Naive thymus-derived CD4-positive, alpha-beta T cell (primary cell): ENCODE measurements at regions of chr20 and their contacts with region 1.

Region 1: GRCh38 chr20:41232973-41233926 is 84.3 kb downstream of the ZHX3 start:
- DNase-seq: no peak
- ATAC-seq: no peak
- H3K4me3 ChIP-seq: no peak overlapping the region
- H3K4me3 Mint-ChIP-seq: peak overlapping the region in 5 of 10 donors; percentile 9 to 55 (median 15)
- H3K27ac ChIP-seq: no peak overlapping the region
- H3K27ac Mint-ChIP-seq: peak overlapping the region in 2 of 9 donors; percentile 1 to 28
- H3K4me1 ChIP-seq: peaks cover 0 to 7% of the 10 kb centered on the region in 2 donors
- H3K4me1 Mint-ChIP-seq: peaks cover 16 to 31% (median 20%) of the 10 kb centered on the region in 7 donors
- H3K27me3 ChIP-seq: no peaks in the 10 kb centered on the region
- H3K27me3 Mint-ChIP-seq: no peaks in the 10 kb centered on the region

Region 2: GRCh38 chr20:40970201-40970600 is 263.0 kb before region 1 on chr20:
- CTCF ChIA-PET with region 1: interaction called, 3 read pairs
- POLR2A ChIA-PET with region 1: no interaction called
- intact Hi-C with region 1: loop called (anchors 1 kb)
- DNase-seq: no peak
- ATAC-seq: no peak
- H3K4me3 ChIP-seq: no peak overlapping the region
- H3K4me3 Mint-ChIP-seq: no peak overlapping the region
- H3K27ac ChIP-seq: no peak overlapping the region
- H3K27ac Mint-ChIP-seq: no peak overlapping the region
- H3K4me1 ChIP-seq: no peaks in the 10 kb centered on the region
- H3K4me1 Mint-ChIP-seq: peaks cover 5 to 12% (median 9%) of the 10 kb centered on the region in 7 donors
- H3K27me3 ChIP-seq: no peaks in the 10 kb centered on the region
- H3K27me3 Mint-ChIP-seq: peaks cover 0 to 49% (median 8%) of the 10 kb centered on the region in 5 donors

Region 3: GRCh38 chr20:41161886-41162285 is 71.4 kb before region 1 on chr20:
- CTCF ChIA-PET with region 1: interaction called, 8 read pairs
- POLR2A ChIA-PET with region 1: no interaction called
- intact Hi-C with region 1: loop called in 1 of 2 experiments (anchors 1 kb)
- DNase-seq: no peak
- ATAC-seq: no peak
- H3K4me3 ChIP-seq: no peak overlapping the region
- H3K4me3 Mint-ChIP-seq: peak overlapping the region in 9 of 10 donors; percentile 25 to 67 (median 39)
- H3K27ac ChIP-seq: peak overlapping the region; percentile 82
- H3K27ac Mint-ChIP-seq: peak overlapping the region; percentile 79 to 100 (median 94)
- H3K4me1 ChIP-seq: peaks cover 59 to 61% of the 10 kb centered on the region in 2 donors
- H3K4me1 Mint-ChIP-seq: peaks cover 60 to 81% (median 76%) of the 10 kb centered on the region in 7 donors
- H3K27me3 ChIP-seq: no peaks in the 10 kb centered on the region
- H3K27me3 Mint-ChIP-seq: no peaks in the 10 kb centered on the region

Region 4: GRCh38 chr20:41222296-41222695 is 11.0 kb before region 1 on chr20:
- CTCF ChIA-PET with region 1: interaction called, 13 read pairs
- POLR2A ChIA-PET with region 1: no interaction called
- intact Hi-C with region 1: no loop called
- DNase-seq: no peak
- ATAC-seq: no peak
- H3K4me3 ChIP-seq: no peak overlapping the region
- H3K4me3 Mint-ChIP-seq: no peak overlapping the region
- H3K27ac ChIP-seq: no peak overlapping the region
- H3K27ac Mint-ChIP-seq: peak overlapping the region in 1 of 9 donors; percentile 65
- H3K4me1 ChIP-seq: no peaks in the 10 kb centered on the region
- H3K4me1 Mint-ChIP-seq: peaks cover 0 to 9% (median 0%) of the 10 kb centered on the region in 7 donors
- H3K27me3 ChIP-seq: no peaks in the 10 kb centered on the region
- H3K27me3 Mint-ChIP-seq: no peaks in the 10 kb centered on the region

Region 5: GRCh38 chr20:41339507-41340326 is 106.5 kb after region 1 on chr20:
- CTCF ChIA-PET with region 1: interaction called, 7 read pairs
- POLR2A ChIA-PET with region 1: no interaction called
- intact Hi-C with region 1: loop called (anchors 1 to 2 kb)
- DNase-seq: peak; percentile 72 to 92 (median 83)
- ATAC-seq: peak; percentile 97
- H3K4me3 ChIP-seq: peak overlapping the region; percentile 28
- H3K4me3 Mint-ChIP-seq: peak overlapping the region; percentile 72 to 85 (median 82)
- H3K27ac ChIP-seq: no peak overlapping the region
- H3K27ac Mint-ChIP-seq: peak overlapping the region in 5 of 9 donors; percentile 47 to 86 (median 67)
- H3K4me1 ChIP-seq: peaks cover 0 to 3% of the 10 kb centered on the region in 2 donors
- H3K4me1 Mint-ChIP-seq: peaks cover 8 to 15% (median 9%) of the 10 kb centered on the region in 7 donors
- H3K27me3 ChIP-seq: no peaks in the 10 kb centered on the region
- H3K27me3 Mint-ChIP-seq: peaks cover 0 to 12% (median 3%) of the 10 kb centered on the region in 5 donors

Region 6: DNA sequence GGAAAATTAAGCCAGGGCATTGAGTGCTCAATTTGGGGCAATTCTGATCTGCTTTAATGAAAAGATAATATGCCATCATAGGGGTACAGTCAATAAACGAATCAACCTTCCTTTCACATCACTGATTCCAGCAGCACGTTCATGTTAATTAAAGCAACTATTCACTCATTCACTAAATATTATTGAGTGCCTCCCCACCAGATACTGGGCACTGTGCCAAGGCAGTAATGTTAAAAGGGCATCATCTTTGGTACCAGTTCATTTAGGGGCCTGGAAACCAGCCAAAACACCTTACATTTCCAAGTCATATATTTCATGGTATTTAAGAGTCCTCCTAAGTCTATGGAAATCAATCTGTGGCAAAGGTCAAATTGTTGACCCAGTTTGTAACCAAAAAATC is 254.6 kb after region 1 on chr20:
- CTCF ChIA-PET with region 1: no interaction called
- POLR2A ChIA-PET with region 1: no interaction called
- intact Hi-C with region 1: no loop called
- DNase-seq: no peak
- ATAC-seq: no peak
- H3K4me3 ChIP-seq: no peak overlapping the region
- H3K4me3 Mint-ChIP-seq: no peak overlapping the region
- H3K27ac ChIP-seq: no peak overlapping the region
- H3K27ac Mint-ChIP-seq: peak overlapping the region in 1 of 9 donors; percentile 36
- H3K4me1 ChIP-seq: no peaks in the 10 kb centered on the region
- H3K4me1 Mint-ChIP-seq: peaks cover 0 to under 1% (median 0%) of the 10 kb centered on the region in 7 donors
- H3K27me3 ChIP-seq: no peaks in the 10 kb centered on the region
- H3K27me3 Mint-ChIP-seq: no peaks in the 10 kb centered on the region